Activated naive CD4-positive, alpha-beta T cell treated with anti-CD3 and anti-CD28 coated beads for 36 hours (primary cell): ENCODE measurements at regions of chr6 and their contacts with region 1.

Region 1: DNA sequence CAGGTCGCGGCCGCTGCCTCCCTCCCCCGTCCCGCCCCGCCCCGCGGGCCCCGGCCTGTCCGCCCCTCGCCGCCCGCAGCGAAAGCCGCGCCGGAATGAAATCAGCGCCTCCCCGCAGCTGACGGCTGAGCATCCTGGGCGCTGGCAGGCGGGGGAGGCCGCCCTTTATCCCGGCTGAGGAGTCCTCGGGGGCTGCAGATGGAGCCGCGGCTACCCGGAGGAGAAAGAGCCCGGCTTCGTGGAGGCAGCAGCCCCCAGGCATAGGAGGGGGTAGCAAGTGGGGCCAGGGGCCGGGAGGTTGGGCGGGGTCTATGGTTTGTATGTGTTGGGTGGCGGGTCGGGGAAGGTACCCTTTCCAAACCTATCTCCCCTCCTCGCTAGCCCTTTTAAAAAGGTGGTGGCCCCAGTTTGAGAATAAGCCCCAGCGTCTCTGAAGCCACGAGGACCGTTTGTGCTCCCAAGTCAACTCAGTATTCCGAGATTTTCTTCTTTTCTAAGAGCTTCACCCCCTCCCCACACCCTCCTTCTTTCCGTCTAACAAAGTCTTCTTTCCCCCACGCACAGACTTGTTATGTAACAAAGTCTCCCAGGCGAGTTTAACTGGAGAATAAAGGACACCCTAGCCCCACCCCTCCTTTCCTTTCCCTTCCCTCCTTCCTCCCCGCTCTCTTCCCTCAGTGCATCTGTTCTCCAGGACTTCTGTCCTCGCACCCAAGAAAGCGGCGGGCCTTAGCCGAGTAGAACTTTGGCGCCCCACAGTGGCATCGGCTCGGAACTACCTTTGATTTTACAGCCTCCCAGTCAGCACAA is 11.0 kb downstream of the POU3F2 start:
- DNase-seq: peak; percentile 80
- H3K4me3 Mint-ChIP-seq: peak overlapping the region; percentile 49
- H3K27ac Mint-ChIP-seq: no peak overlapping the region
- H3K4me1 Mint-ChIP-seq: peaks cover 23% of the 10 kb centered on the region
- H3K27me3 Mint-ChIP-seq: peaks cover 76% of the 10 kb centered on the region

Region 2: GRCh38 chr6:97068211-97068610 is 1777.2 kb before region 1 on chr6:
- CTCF ChIA-PET with region 1: no interaction called
- intact Hi-C with region 1: loop called (anchors 5 kb)
- DNase-seq: peak; percentile 49
- H3K4me3 Mint-ChIP-seq: no peak overlapping the region
- H3K27ac Mint-ChIP-seq: no peak overlapping the region
- H3K4me1 Mint-ChIP-seq: no peaks in the 10 kb centered on the region
- H3K27me3 Mint-ChIP-seq: no peaks in the 10 kb centered on the region

Region 3: DNA sequence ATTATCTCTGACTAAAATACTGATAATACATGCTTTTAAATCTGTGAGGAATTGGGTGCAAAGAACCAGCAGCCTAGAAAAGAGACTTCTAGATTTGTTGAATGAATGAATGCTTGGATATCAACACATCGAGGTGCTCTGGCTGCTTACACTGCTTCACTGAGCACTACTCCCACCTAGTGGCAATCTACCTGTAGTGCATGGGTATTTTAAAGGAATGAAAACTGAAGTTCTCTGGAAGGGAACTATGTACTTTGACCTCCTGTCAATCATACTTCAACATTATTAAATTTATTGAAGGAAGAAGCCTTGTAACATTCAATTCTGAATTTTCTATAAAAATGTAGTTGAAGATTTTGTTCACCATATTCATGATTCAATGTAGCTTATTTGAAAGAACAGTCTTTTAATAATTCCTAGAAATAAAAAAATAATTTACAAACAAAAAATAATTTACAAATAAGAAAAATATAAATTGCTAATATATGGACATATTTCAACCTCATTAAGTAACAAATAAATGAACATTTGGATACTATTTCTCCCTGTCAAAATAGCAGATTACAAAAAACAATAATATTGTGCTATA is 1451.2 kb before region 1 on chr6:
- CTCF ChIA-PET with region 1: no interaction called
- intact Hi-C with region 1: loop called (anchors 5 kb)
- DNase-seq: peak; percentile 57
- H3K4me3 Mint-ChIP-seq: no peak overlapping the region
- H3K27ac Mint-ChIP-seq: no peak overlapping the region
- H3K4me1 Mint-ChIP-seq: no peaks in the 10 kb centered on the region
- H3K27me3 Mint-ChIP-seq: peaks cover 10% of the 10 kb centered on the region

Region 4: DNA sequence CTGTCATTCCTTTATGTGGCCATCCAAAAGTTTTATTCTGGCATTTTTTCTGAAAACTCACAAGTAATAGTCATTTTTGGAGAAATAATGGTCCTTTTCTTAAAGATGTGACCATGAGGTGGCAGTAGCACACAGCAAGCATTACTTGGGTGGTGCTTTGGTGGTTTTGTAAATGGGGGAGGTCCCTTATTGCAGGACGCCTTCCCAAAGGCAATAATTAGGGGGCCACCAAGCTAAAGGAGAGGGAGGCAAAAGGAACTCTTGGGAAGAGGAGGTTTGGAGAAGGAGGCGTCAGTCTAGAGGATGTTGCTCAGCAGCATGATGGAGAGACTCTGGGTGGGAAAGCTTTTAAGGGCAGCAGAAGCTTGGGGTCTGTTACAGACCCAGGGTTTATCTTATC is 1139.8 kb before region 1 on chr6:
- CTCF ChIA-PET with region 1: no interaction called
- intact Hi-C with region 1: loop called (anchors 5 kb)
- DNase-seq: no peak
- H3K4me3 Mint-ChIP-seq: no peak overlapping the region
- H3K27ac Mint-ChIP-seq: no peak overlapping the region
- H3K4me1 Mint-ChIP-seq: no peaks in the 10 kb centered on the region
- H3K27me3 Mint-ChIP-seq: no peaks in the 10 kb centered on the region

Region 5: DNA sequence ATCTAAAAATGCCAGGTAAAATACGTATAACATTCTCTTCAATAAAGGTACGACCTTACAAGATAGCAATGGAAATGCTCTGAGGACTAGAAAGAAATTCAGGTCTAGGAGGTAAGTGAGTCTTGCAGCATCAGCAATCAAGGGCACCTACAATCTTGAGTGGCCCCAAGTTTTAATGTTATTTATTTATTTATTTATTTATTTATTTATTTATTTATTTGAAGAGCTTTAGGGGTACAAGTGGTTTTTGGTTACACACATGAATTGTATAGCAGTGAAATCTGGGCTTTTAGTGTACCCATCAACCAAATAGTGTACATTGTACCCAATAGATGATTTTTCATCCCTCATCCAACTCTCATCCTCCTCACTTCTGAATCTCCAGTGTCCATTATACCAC is 585.0 kb before region 1 on chr6:
- CTCF ChIA-PET with region 1: no interaction called
- intact Hi-C with region 1: loop called (anchors 10 kb)
- DNase-seq: no peak
- H3K4me3 Mint-ChIP-seq: no peak overlapping the region
- H3K27ac Mint-ChIP-seq: no peak overlapping the region
- H3K4me1 Mint-ChIP-seq: no peaks in the 10 kb centered on the region
- H3K27me3 Mint-ChIP-seq: no peaks in the 10 kb centered on the region

Region 6: DNA sequence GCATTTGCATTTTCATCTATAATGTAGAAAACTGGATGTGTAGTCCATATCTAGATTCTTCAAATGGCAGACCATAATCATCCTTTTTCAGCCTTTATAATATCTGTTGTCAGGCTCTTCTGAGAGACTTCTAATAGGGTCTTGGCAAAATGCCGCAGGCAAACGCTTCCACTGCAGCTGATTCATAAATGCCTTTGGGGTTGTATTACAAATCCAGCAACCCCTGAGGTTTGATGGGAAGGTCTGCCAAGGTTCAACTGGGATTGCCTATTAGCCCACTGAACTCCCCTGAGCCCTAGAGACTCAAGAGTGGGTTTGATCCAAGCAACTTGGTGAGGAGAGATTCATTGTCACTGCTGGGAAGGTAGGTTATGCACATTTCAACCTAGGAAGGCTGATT is 376.3 kb before region 1 on chr6:
- CTCF ChIA-PET with region 1: no interaction called
- intact Hi-C with region 1: no loop called
- DNase-seq: no peak
- H3K4me3 Mint-ChIP-seq: no peak overlapping the region
- H3K27ac Mint-ChIP-seq: no peak overlapping the region
- H3K4me1 Mint-ChIP-seq: no peaks in the 10 kb centered on the region
- H3K27me3 Mint-ChIP-seq: no peaks in the 10 kb centered on the region

Region 7: DNA sequence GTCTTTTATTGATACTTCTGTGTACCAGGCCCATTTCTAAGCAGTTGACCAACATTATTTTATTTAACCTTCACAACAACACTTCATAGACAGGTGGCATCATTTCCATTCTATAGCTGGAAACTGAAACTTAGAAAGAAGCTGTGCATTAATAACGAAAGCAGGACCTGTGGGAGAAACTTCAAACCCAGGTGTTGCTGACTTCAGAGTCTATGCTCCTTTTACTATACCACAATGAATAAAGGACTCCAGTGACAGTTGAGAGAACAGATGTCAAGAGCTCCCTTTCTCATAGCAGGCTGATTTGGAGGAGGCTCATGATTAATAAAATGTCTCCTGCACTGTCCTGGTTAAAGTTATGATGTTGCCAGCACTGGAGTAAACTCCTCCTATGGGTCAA is 67.7 kb before region 1 on chr6:
- CTCF ChIA-PET with region 1: no interaction called
- intact Hi-C with region 1: loop called (anchors 2 kb)
- DNase-seq: no peak
- H3K4me3 Mint-ChIP-seq: no peak overlapping the region
- H3K27ac Mint-ChIP-seq: no peak overlapping the region
- H3K4me1 Mint-ChIP-seq: no peaks in the 10 kb centered on the region
- H3K27me3 Mint-ChIP-seq: peaks cover 35% of the 10 kb centered on the region

Region 8: GRCh38 chr6:98834060-98835031 is 11.1 kb before region 1 on chr6 and contains the start of gene POU3F2:
- CTCF ChIA-PET with region 1: interaction called, 6 read pairs
- intact Hi-C with region 1: loop called (anchors 1 kb)
- DNase-seq: peak; percentile 78
- H3K4me3 Mint-ChIP-seq: peak within 1 kb of the TSS; percentile 73
- H3K27ac Mint-ChIP-seq: no peak within 1 kb of the TSS
- H3K4me1 Mint-ChIP-seq: peaks cover 34% of the 10 kb centered on the region
- H3K27me3 Mint-ChIP-seq: peaks cover 72% of the 10 kb centered on the region
- total RNA-seq, gene POU3F2: not detected